Activated naive CD4-positive, alpha-beta T cell treated with anti-CD3 and anti-CD28 coated beads for 36 hours (primary cell): ENCODE measurements at regions of chr16 and their contacts with region 1.

Region 1: DNA sequence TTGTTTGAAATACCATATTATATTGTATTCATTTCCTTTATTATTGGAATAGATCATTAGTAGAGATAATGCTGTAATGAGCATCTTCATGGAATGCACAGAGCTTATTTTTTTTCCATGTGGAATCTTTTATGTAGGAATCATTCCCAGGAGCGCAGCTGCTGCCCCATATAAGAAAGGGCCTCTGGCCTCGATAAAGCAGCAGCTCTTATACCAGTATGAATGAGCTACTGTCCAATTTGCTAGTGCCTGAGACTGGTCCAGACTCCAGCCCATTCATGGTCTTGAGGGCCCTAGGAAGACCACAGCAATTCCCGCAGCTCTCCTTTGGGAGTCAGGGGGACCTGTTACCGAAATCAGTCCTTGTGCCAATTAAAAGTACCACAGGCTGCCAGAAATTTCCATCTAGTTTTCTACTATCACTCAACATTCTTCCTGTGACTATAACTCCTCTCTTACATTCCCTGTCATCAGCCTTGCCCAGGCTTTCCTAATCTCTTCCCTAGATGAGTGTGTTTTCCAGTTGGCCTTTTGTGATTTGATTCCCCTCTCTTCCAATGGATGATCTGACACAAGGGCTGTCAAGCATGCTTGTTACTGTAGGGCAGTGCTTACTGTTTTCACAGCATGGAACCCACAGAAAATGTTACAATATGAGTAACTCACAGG is 1.9 kb downstream of the ZNF843 start:
- DNase-seq: no peak
- H3K4me3 Mint-ChIP-seq: no peak overlapping the region
- H3K27ac Mint-ChIP-seq: no peak overlapping the region
- H3K4me1 Mint-ChIP-seq: peaks cover 9% of the 10 kb centered on the region
- H3K27me3 Mint-ChIP-seq: no peaks in the 10 kb centered on the region

Region 2: GRCh38 chr16:30984669-30985400 is 455.8 kb before region 1 on chr16 and contains the start of gene HSD3B7:
- CTCF ChIA-PET with region 1: interaction called, 12 read pairs
- intact Hi-C with region 1: loop called (anchors 1 kb)
- DNase-seq: peak; percentile 87
- H3K4me3 Mint-ChIP-seq: no peak within 1 kb of the TSS
- H3K27ac Mint-ChIP-seq: no peak within 1 kb of the TSS
- H3K4me1 Mint-ChIP-seq: no peaks in the 10 kb centered on the region
- H3K27me3 Mint-ChIP-seq: no peaks in the 10 kb centered on the region
- total RNA-seq, gene HSD3B7: 0.69 to 0.98 TPM

Region 3: GRCh38 chr16:31202414-31203375 is 238.0 kb before region 1 on chr16 and contains the start of gene PYCARD:
- CTCF ChIA-PET with region 1: interaction called, 3 read pairs
- intact Hi-C with region 1: loop called (anchors 5 kb)
- DNase-seq: peak; percentile 31
- H3K4me3 Mint-ChIP-seq: peak within 1 kb of the TSS; percentile 71
- H3K27ac Mint-ChIP-seq: no peak within 1 kb of the TSS
- H3K4me1 Mint-ChIP-seq: peaks cover 46% of the 10 kb centered on the region
- H3K27me3 Mint-ChIP-seq: no peaks in the 10 kb centered on the region
- total RNA-seq, gene PYCARD: 2.4 to 2.5 TPM

Region 4: DNA sequence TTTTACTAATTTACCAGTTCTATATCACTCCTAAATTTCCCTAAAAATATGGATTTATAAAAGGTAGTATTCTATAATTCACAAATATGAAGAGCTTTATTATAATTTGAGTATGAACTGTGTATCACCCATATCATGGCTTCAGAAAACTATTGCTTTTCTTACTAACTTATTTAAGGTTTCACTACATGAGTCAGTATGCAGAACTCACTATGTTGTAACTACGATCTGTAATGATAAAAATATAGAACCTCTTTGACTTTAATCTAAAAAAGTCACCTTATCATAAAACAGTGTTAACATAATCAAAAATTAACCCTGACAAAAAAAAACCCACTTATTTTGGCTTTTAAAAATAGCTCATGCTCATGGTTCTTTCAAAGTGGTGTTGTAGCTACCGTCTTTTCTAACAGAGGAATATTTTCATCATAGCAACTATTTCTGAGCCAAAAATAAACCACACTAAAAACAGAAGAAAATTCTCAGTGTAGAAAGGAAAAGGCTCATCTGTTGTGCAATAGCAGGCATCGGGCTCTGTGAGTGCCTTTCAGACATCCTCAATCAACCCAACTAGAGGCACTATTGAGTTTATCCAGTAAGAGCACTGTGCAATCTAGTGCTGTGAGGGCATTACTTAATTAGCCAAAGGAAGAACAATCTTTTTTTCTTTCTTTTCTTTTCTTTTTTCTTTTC is 138.8 kb before region 1 on chr16:
- CTCF ChIA-PET with region 1: no interaction called
- intact Hi-C with region 1: loop called (anchors 5 kb)
- DNase-seq: peak; percentile 21
- H3K4me3 Mint-ChIP-seq: no peak overlapping the region
- H3K27ac Mint-ChIP-seq: no peak overlapping the region
- H3K4me1 Mint-ChIP-seq: peaks cover 8% of the 10 kb centered on the region
- H3K27me3 Mint-ChIP-seq: peaks cover 7% of the 10 kb centered on the region

Region 5: GRCh38 chr16:31382485-31383161 is 58.0 kb before region 1 on chr16:
- CTCF ChIA-PET with region 1: interaction called, 6 read pairs
- intact Hi-C with region 1: loop called (anchors 5 kb)
- DNase-seq: peak; percentile 81
- H3K4me3 Mint-ChIP-seq: no peak overlapping the region
- H3K27ac Mint-ChIP-seq: no peak overlapping the region
- H3K4me1 Mint-ChIP-seq: peaks cover 15% of the 10 kb centered on the region
- H3K27me3 Mint-ChIP-seq: peaks cover 5% of the 10 kb centered on the region